B cell (primary cell): ENCODE measurements at regions of chr9 and their contacts with region 1.

Region 1: DNA sequence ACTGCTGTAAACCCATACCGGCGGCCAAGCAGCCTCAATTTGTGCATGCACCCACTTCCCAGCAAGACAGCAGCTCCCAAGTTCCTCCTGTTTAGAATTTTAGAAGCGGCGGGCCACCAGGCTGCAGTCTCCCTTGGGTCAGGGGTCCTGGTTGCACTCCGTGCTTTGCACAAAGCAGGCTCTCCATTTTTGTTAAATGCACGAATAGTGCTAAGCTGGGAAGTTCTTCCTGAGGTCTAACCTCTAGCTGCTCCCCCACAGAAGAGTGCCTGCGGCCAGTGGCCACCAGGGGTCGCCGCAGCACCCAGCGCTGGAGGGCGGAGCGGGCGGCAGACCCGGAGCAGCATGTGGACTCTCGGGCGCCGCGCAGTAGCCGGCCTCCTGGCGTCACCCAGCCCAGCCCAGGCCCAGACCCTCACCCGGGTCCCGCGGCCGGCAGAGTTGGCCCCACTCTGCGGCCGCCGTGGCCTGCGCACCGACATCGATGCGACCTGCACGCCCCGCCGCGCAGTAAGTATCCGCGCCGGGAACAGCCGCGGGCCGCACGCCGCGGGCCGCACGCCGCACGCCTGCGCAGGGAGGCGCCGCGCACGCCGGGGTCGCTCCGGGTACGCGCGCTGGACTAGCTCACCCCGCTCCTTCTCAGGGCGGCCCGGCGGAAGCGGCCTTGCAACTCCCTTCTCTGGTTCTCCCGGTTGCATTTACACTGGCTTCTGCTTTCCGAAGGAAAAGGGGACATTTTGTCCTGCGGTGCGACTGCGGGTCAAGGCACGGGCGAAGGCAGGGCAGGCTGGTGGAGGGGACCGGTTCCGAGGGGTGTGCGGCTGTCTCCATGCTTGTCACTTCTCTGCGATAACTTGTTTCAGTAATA is at the start of gene FXN:
- DNase-seq: peak; percentile 88
- ATAC-seq: peak; percentile 90
- H3K4me3 ChIP-seq: peak within 1 kb of the TSS; percentile 69 to 94 (median 84)
- H3K4me3 Mint-ChIP-seq: peak within 1 kb of the TSS; percentile 99
- H3K27ac ChIP-seq: peak within 1 kb of the TSS; percentile 12 to 28
- H3K27ac Mint-ChIP-seq: peak within 1 kb of the TSS; percentile 93
- H3K4me1 ChIP-seq: peaks cover 8 to 11% of the 10 kb centered on the region in 2 donors
- H3K4me1 Mint-ChIP-seq: peaks cover 11% of the 10 kb centered on the region
- H3K27me3 ChIP-seq: no peaks in the 10 kb centered on the region
- H3K27me3 Mint-ChIP-seq: no peaks in the 10 kb centered on the region
- CTCF ChIP-seq: peak; percentile 93
- total RNA-seq, gene FXN: 8.0 and 8.8 TPM in 2 replicates

Region 2: DNA sequence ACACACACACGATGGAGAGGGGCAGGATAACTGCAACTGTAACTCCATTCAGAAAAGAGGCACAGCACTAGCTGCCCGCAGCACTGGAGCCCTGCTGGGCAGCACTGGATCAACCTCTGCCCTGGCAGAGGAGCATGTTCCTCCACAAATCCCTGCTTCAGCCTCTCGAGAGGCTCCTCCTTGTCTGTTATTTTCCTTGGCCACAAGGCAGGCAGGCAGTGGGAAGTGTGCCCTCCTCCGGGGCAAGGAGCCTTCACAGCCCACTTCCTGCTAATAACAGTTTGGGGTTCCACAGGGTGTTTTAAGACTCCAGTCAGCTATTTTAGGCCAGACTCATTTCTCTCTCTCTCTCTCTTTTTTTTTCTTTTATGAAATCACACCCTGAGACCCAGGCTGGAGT is 11.7 kb after region 1 on chr9:
- CTCF ChIA-PET with region 1: interaction called, 14 read pairs
- POLR2A ChIA-PET with region 1: no interaction called
- intact Hi-C with region 1: no loop called
- DNase-seq: no peak
- ATAC-seq: no peak
- H3K4me3 ChIP-seq: no peak overlapping the region
- H3K4me3 Mint-ChIP-seq: no peak overlapping the region
- H3K27ac ChIP-seq: no peak overlapping the region
- H3K27ac Mint-ChIP-seq: no peak overlapping the region
- H3K4me1 ChIP-seq: no peaks in the 10 kb centered on the region
- H3K4me1 Mint-ChIP-seq: peaks cover 3% of the 10 kb centered on the region
- H3K27me3 ChIP-seq: no peaks in the 10 kb centered on the region
- H3K27me3 Mint-ChIP-seq: no peaks in the 10 kb centered on the region
- CTCF ChIP-seq: no peak

Region 3: GRCh38 chr9:69121828-69122548 is 86.3 kb after region 1 on chr9:
- CTCF ChIA-PET with region 1: interaction called, 3 read pairs
- POLR2A ChIA-PET with region 1: no interaction called
- intact Hi-C with region 1: loop called (anchors 5 kb)
- DNase-seq: peak; percentile 70
- ATAC-seq: peak; percentile 70
- H3K4me3 ChIP-seq: peak overlapping the region; percentile 45 to 89 (median 69)
- H3K4me3 Mint-ChIP-seq: peak overlapping the region; percentile 97
- H3K27ac ChIP-seq: no peak overlapping the region
- H3K27ac Mint-ChIP-seq: peak overlapping the region; percentile 72
- H3K4me1 ChIP-seq: peaks cover 12 to 16% of the 10 kb centered on the region in 2 donors
- H3K4me1 Mint-ChIP-seq: peaks cover 15% of the 10 kb centered on the region
- H3K27me3 ChIP-seq: peaks cover 0 to 6% (median 0%) of the 10 kb centered on the region in 4 experiments
- H3K27me3 Mint-ChIP-seq: no peaks in the 10 kb centered on the region
- CTCF ChIP-seq: no peak

Region 4: DNA sequence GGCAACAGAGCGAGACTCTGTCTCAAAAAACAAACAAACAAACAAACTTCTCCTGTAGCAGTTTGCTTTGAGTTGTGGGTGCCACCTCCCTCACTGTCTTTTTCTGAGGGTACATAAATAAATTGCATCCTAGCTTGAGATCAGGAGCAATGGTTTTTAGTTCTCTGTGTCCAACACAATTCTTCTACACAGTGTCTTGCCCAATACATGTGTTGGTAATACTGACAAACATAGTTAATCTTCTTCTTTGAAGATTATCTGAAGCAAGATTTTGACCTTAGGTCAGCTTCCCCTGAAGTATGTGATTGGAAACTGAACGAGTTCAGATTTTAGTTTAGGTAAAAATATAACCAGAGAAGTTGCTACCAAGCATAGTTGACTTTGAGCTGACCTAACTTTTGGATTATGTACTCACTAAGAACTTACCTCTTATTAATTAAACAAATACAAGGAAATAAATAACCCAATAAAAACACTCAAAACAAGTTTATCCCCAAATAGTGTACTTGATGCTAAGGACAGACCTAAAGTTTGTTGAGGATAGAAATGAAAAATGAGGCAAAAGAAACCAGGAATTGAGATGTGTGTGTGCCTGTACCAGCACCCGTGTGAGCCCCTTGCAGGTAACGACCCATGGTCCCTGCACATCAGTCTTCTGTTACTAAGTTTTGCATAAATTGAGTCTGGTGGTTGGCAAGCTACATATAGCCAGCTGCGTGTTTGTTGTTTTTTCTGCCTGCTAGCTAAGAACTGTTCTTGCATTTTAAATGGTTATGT is 154.6 kb after region 1 on chr9:
- CTCF ChIA-PET with region 1: interaction called, 11 read pairs
- POLR2A ChIA-PET with region 1: no interaction called
- intact Hi-C with region 1: loop called (anchors 5 kb)
- DNase-seq: no peak
- ATAC-seq: no peak
- H3K4me3 ChIP-seq: no peak overlapping the region
- H3K4me3 Mint-ChIP-seq: no peak overlapping the region
- H3K27ac ChIP-seq: no peak overlapping the region
- H3K27ac Mint-ChIP-seq: no peak overlapping the region
- H3K4me1 ChIP-seq: no peaks in the 10 kb centered on the region
- H3K4me1 Mint-ChIP-seq: peaks cover 6% of the 10 kb centered on the region
- H3K27me3 ChIP-seq: no peaks in the 10 kb centered on the region
- H3K27me3 Mint-ChIP-seq: no peaks in the 10 kb centered on the region
- CTCF ChIP-seq: no peak

Region 5: GRCh38 chr9:69877854-69878514 is 842.3 kb after region 1 on chr9:
- CTCF ChIA-PET with region 1: no interaction called
- POLR2A ChIA-PET with region 1: no interaction called
- intact Hi-C with region 1: loop called (anchors 5 kb)
- DNase-seq: peak; percentile 14
- ATAC-seq: no peak
- H3K4me3 ChIP-seq: no peak overlapping the region
- H3K4me3 Mint-ChIP-seq: no peak overlapping the region
- H3K27ac ChIP-seq: no peak overlapping the region
- H3K27ac Mint-ChIP-seq: no peak overlapping the region
- H3K4me1 ChIP-seq: no peaks in the 10 kb centered on the region
- H3K4me1 Mint-ChIP-seq: no peaks in the 10 kb centered on the region
- H3K27me3 ChIP-seq: peaks cover 0 to 3% (median 0%) of the 10 kb centered on the region in 4 experiments
- H3K27me3 Mint-ChIP-seq: peaks cover 8% of the 10 kb centered on the region
- CTCF ChIP-seq: peak; percentile 54

Region 6: GRCh38 chr9:69919461-69920061 is 883.9 kb after region 1 on chr9:
- CTCF ChIA-PET with region 1: no interaction called
- POLR2A ChIA-PET with region 1: no interaction called
- intact Hi-C with region 1: loop called (anchors 5 kb)
- DNase-seq: peak; percentile 49
- ATAC-seq: no peak
- H3K4me3 ChIP-seq: no peak overlapping the region
- H3K4me3 Mint-ChIP-seq: no peak overlapping the region
- H3K27ac ChIP-seq: no peak overlapping the region
- H3K27ac Mint-ChIP-seq: no peak overlapping the region
- H3K4me1 ChIP-seq: no peaks in the 10 kb centered on the region
- H3K4me1 Mint-ChIP-seq: no peaks in the 10 kb centered on the region
- H3K27me3 ChIP-seq: no peaks in the 10 kb centered on the region
- H3K27me3 Mint-ChIP-seq: peaks cover 21% of the 10 kb centered on the region
- CTCF ChIP-seq: peak; percentile 81